WTC11 (cell line): ENCODE measurements at regions of chr2 and their contacts with region 1.

Region 1: GRCh38 chr2:241081643-241082340 is 20.3 kb downstream of the MTERF4 start:
- DNase-seq: no peak
- ATAC-seq: no peak
- H3K4me3 Mint-ChIP-seq: no peak overlapping the region
- H3K27ac Mint-ChIP-seq: no peak overlapping the region
- H3K4me1 Mint-ChIP-seq: no peaks in the 10 kb centered on the region
- H3K27me3 Mint-ChIP-seq: no peaks in the 10 kb centered on the region
- CTCF ChIP-seq: no peak

Region 2: DNA sequence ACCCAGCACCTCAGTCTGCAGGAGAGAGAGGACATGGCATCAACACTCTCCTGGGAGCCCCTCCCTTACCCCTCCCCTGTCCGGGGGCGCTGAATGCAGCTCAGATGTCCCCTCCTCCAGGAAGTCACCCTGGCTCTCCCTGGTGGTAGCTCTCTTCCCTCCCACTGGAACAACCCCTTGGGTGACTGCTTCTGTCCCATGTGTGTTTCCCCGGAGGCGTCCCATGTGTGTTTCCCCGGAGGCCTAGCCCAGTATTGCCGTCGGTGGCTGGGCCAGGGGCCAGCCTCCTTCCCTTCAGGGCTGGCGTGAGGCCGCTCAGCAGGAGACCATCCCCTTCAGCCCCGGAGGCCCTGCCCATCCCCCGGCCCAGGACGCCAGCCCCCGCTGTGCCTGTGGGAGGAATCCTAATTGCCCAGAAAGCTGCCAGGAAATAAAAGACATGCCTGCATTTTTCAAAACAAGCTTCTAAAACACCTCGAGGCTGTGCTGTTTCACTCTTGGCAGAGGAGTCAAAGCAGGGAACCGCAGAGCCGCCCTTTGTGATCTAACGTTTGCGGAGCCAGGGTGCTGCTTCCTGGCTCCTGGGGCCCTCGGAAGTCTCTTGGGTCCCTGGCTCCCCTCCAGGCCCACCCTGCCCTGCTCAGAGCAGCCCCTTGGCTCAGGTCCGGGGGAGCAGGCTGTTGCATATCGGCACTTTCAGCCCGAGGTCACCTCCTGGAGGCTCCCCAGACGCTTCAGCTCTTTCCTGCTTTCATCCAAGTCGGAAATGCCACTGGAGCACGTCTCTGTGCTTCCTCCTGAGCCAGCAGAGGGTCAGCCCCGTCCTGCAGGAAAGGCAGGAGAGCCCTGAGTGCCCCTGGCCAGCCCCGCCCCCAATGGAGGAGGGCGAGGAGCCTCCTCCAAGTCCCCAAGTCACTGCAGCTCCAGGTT is 71.9 kb before region 1 on chr2:
- CTCF ChIA-PET with region 1: interaction called, 11 read pairs
- POLR2A ChIA-PET with region 1: no interaction called
- DNase-seq: peak; percentile 67
- ATAC-seq: peak; percentile 78
- H3K4me3 Mint-ChIP-seq: peak overlapping the region; percentile 48
- H3K27ac Mint-ChIP-seq: no peak overlapping the region
- H3K4me1 Mint-ChIP-seq: peaks cover 19% of the 10 kb centered on the region
- H3K27me3 Mint-ChIP-seq: peaks cover 10% of the 10 kb centered on the region; the same call in 1 of the 2 replicates
- CTCF ChIP-seq: no peak

Region 3: GRCh38 chr2:241064008-241064801 is 17.6 kb before region 1 on chr2:
- CTCF ChIA-PET with region 1: interaction called, 20 read pairs
- POLR2A ChIA-PET with region 1: no interaction called
- DNase-seq: peak; percentile 43
- ATAC-seq: peak; percentile 55
- H3K4me3 Mint-ChIP-seq: peak overlapping the region; percentile 14; the same call in 1 of the 2 replicates
- H3K27ac Mint-ChIP-seq: no peak overlapping the region
- H3K4me1 Mint-ChIP-seq: no peaks in the 10 kb centered on the region
- H3K27me3 Mint-ChIP-seq: no peaks in the 10 kb centered on the region
- CTCF ChIP-seq: no peak

Region 4: DNA sequence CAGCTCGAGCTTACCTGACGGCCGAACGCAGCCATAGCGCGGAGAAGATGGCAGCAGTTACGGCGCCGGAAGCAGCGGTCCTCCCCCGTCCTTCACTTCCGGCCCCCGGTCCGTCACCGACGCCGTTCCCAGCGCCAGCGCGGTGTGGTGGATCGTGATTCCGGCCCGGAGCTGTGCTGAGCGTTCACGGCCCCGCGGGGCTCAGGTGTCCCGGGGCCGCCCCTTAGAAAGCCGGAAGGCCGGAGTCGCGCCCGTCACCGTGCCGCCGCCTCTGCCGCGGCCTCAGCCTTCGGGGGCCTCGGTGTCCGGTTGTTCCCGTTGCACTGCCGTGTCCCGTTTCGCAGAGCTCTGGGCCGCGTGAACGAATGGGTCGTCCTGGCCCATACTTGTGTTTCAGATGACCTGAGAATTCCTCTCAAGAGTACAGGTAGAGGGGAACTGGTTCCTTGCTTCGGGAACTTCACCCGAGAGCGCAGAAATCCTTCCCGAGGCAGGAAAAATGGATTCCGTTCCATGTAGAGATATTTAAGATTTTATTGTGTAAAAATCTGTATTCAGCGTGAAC is 20.5 kb after region 1 on chr2 and contains the start of gene MTERF4:
- CTCF ChIA-PET with region 1: interaction called, 12 read pairs
- POLR2A ChIA-PET with region 1: no interaction called
- DNase-seq: peak; percentile 89
- ATAC-seq: peak; percentile 97
- H3K4me3 Mint-ChIP-seq: peak within 1 kb of the TSS; percentile 95
- H3K27ac Mint-ChIP-seq: peak within 1 kb of the TSS; percentile 98
- H3K4me1 Mint-ChIP-seq: peaks cover 5% of the 10 kb centered on the region
- H3K27me3 Mint-ChIP-seq: no peaks in the 10 kb centered on the region
- CTCF ChIP-seq: no peak
- total RNA-seq, gene MTERF4: 22.4 to 25.4 TPM (median 23.3 TPM) in 3 replicates

Region 5: GRCh38 chr2:241149925-241150659 is 68.3 kb after region 1 on chr2 and contains the start of gene PPP1R7:
- CTCF ChIA-PET with region 1: interaction called, 21 read pairs
- POLR2A ChIA-PET with region 1: no interaction called
- DNase-seq: peak; percentile 97
- ATAC-seq: peak; percentile 79
- H3K4me3 Mint-ChIP-seq: peak within 1 kb of the TSS; percentile 93
- H3K27ac Mint-ChIP-seq: peak within 1 kb of the TSS; percentile 96
- H3K4me1 Mint-ChIP-seq: peaks cover 27% of the 10 kb centered on the region
- H3K27me3 Mint-ChIP-seq: no peaks in the 10 kb centered on the region
- CTCF ChIP-seq: no peak
- total RNA-seq, gene PPP1R7: 44.0 to 49.1 TPM (median 49.0 TPM) in 3 replicates